Endothelial cell of umbilical vein (primary cell): ENCODE measurements at regions of chr4 and their contacts with region 1.

Region 1: GRCh38 chr4:96675896-96676295 is 836.0 kb downstream of the PDHA2 start:
- DNase-seq: no peak
- H3K4me3 ChIP-seq: no peak overlapping the region
- H3K27ac ChIP-seq: peak overlapping the region; percentile 93
- H3K4me1 ChIP-seq: peaks cover 39% of the 10 kb centered on the region
- H3K27me3 ChIP-seq: no peaks in the 10 kb centered on the region
- CTCF ChIP-seq: no peak
- POLR2A ChIP-seq: no peak

Region 2: GRCh38 chr4:96264941-96265463 is 410.9 kb before region 1 on chr4:
- CTCF ChIA-PET with region 1: no interaction called
- POLR2A ChIA-PET with region 1: no interaction called
- dilution Hi-C with region 1: no loop called
- intact Hi-C with region 1: no loop called
- DNase-seq: no peak
- H3K4me3 ChIP-seq: no peak overlapping the region
- H3K27ac ChIP-seq: no peak overlapping the region
- H3K4me1 ChIP-seq: no peaks in the 10 kb centered on the region
- H3K27me3 ChIP-seq: no peaks in the 10 kb centered on the region
- CTCF ChIP-seq: no peak
- POLR2A ChIP-seq: no peak

Region 3: GRCh38 chr4:96448315-96448872 is 227.5 kb before region 1 on chr4:
- CTCF ChIA-PET with region 1: no interaction called
- POLR2A ChIA-PET with region 1: no interaction called
- dilution Hi-C with region 1: no loop called
- intact Hi-C with region 1: no loop called
- DNase-seq: no peak
- H3K4me3 ChIP-seq: no peak overlapping the region
- H3K27ac ChIP-seq: no peak overlapping the region
- H3K4me1 ChIP-seq: no peaks in the 10 kb centered on the region
- H3K27me3 ChIP-seq: no peaks in the 10 kb centered on the region
- CTCF ChIP-seq: no peak
- POLR2A ChIP-seq: no peak

Region 4: DNA sequence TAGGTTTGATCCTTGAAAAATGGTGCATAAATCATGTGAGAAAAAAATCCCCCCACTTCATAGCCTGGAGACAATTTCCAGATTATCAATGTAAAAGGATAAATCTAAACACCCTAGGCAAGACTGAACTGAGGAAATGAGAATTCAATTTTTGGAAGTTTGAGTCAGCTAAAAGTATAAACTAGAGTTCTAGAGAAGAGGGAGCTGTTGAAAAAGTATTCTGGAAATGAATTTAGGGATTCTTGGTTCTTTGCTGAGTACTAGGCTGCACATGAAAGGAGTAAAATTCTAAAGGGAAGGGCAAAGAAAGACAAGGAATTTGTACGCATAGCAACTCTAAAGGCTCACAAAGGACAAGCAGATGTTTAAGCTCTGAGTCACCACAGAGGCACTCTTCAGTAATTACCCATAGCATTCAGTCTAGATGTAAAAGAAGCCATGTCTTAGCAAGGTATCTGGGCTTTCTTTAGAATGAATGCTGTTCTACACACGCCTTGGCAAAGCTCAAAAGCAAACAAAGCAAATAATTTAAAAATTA is 60.5 kb after region 1 on chr4:
- CTCF ChIA-PET with region 1: no interaction called
- POLR2A ChIA-PET with region 1: no interaction called
- dilution Hi-C with region 1: no loop called
- intact Hi-C with region 1: loop called (anchors 1 kb)
- DNase-seq: peak; percentile 46
- H3K4me3 ChIP-seq: no peak overlapping the region
- H3K27ac ChIP-seq: no peak overlapping the region
- H3K4me1 ChIP-seq: no peaks in the 10 kb centered on the region
- H3K27me3 ChIP-seq: no peaks in the 10 kb centered on the region
- CTCF ChIP-seq: no peak
- POLR2A ChIP-seq: no peak